Activated T-helper 2 cell treated with anti-CD3 and anti-CD28 coated beads, Interferon-gamma antibody, Interleukin-2, Interleukin-4, amounts not matched to agents 10 μg/mL and 5 μg/mL and 100 μg/mL, durations not matched to agents 14 hours and 24 hours and 36 hours (primary cell): ENCODE measurements at regions of chr4 and their contacts with region 1.

Region 1: DNA sequence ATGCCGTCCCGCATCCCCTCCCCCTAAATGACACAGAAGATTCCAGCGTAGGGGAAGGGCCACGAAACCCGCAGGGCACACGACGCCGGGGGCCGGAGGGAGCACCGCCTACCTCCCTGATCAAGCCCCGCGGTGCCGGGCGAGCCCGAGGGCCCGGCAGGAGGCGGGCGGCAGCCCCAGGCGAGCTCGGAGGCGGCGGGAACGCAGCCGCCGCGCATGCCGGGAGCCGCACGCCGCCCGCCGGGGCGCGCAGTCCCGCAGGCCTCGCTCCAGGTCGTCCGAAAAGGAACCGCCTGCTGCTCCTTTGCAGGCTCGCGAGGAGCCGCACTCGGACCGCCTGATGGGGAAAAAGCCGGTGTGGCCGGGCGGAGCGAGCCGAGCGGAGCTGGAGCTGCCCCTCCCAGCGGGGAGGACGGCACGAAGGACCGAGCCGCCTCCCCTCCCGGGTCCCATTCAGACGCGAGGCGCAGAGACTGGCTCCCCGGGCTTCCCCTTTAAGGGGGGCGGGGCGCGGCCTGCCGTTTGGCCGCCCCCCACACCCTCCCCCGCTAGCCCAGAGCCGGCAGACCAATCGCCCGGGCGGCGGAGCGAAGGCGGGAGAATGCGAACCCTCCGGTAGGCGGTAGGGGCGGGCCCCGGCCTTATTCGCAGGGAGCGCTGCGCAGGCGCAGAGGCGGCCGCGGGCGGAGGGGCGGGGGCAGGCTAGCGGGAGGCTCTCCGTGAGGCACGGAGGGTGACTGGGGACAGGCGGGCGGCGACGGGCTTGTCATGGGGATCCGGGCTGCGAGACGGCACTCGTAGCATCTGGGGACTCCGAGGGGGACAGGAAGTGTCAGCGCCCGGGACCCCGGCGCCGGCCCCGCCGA is 561 bp upstream of the ING2 start:
- DNase-seq: peak; percentile 99
- H3K4me3 Mint-ChIP-seq: peak overlapping the region; percentile 92
- H3K27ac Mint-ChIP-seq: peak overlapping the region; percentile 85
- H3K4me1 Mint-ChIP-seq: peaks cover 35% of the 10 kb centered on the region
- H3K27me3 Mint-ChIP-seq: no peaks in the 10 kb centered on the region

Region 2: GRCh38 chr4:182917182-182918043 is 586.9 kb before region 1 on chr4 and contains the start of gene DCTD:
- intact Hi-C with region 1: loop called (anchors 5 kb)
- DNase-seq: peak; percentile 77
- H3K4me3 Mint-ChIP-seq: peak within 1 kb of the TSS; percentile 92
- H3K27ac Mint-ChIP-seq: peak within 1 kb of the TSS; percentile 97
- H3K4me1 Mint-ChIP-seq: peaks cover 35% of the 10 kb centered on the region
- H3K27me3 Mint-ChIP-seq: peaks cover 5% of the 10 kb centered on the region
- total RNA-seq, gene DCTD: 121 and 133 TPM in 2 replicates

Region 3: DNA sequence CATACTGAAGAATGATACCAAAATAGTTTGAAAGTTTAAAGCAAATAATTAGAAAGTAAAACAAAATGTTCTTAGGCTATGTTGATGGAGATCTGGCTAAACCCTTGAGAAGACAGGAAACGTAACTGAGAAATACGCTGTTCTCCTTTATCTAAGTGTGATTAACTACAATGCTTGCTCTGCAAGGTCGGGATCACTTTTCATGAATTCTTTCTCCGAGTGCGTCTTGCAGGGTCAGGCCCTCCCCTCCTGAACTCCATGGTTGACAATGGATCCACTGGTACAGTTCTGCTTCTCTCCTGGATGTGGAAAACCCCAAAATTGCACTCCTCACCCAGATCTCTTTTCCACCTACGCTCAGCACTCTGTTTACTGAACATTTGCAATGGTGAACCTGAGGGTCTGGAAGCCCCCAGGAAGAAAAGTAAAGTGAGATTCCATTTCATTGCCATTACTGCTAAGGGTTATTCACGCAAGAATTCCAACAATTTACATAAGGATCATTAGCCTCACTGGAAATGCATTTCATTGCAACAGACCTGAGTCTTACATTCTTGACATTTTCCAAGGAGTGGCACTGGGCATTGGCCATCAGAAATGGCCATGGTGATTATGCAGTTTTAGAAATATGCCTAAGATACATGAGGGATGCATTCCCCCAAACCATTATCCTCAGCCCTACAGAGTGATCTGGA is 429.9 kb before region 1 on chr4:
- intact Hi-C with region 1: no loop called
- DNase-seq: no peak
- H3K4me3 Mint-ChIP-seq: no peak overlapping the region
- H3K27ac Mint-ChIP-seq: no peak overlapping the region
- H3K4me1 Mint-ChIP-seq: no peaks in the 10 kb centered on the region
- H3K27me3 Mint-ChIP-seq: peaks cover 18% of the 10 kb centered on the region

Region 4: DNA sequence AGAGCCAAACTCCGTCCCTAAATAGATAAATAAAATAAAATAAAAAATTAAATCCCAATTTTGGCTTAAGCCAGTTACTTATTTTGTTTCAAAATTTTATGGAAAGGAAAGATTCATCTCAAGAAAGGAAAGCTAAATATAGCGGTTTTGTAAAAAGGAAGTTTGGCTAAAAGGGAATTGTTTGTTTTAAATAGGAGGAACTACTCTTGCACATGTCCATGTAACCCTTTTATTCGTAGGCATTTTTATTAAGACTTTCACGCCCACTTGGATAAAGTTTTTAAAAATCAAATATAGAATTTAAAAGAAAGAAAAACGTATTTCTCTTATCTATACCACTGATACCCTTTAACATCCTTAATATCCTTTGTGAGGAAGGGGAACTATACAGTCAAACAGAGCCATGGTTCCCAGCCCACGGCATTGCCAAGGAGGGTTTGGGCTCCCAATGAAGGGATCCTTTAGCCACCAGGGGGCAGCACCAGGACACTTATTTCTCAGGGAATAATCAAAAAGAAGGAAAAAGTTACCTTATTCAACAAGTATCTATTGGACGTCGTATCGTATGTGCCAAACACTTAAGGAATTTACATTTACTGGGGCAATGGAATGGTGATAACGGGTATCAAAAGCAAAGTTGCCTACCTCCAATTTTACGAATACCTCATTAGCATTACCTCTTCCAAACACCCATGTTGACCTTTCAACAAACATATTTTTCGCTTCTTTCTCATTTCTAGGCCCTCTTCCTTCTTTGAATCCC is 32.2 kb before region 1 on chr4:
- intact Hi-C with region 1: loop called (anchors 1 kb)
- DNase-seq: peak; percentile 48
- H3K4me3 Mint-ChIP-seq: no peak overlapping the region
- H3K27ac Mint-ChIP-seq: no peak overlapping the region
- H3K4me1 Mint-ChIP-seq: peaks cover 5% of the 10 kb centered on the region
- H3K27me3 Mint-ChIP-seq: no peaks in the 10 kb centered on the region

Region 5: DNA sequence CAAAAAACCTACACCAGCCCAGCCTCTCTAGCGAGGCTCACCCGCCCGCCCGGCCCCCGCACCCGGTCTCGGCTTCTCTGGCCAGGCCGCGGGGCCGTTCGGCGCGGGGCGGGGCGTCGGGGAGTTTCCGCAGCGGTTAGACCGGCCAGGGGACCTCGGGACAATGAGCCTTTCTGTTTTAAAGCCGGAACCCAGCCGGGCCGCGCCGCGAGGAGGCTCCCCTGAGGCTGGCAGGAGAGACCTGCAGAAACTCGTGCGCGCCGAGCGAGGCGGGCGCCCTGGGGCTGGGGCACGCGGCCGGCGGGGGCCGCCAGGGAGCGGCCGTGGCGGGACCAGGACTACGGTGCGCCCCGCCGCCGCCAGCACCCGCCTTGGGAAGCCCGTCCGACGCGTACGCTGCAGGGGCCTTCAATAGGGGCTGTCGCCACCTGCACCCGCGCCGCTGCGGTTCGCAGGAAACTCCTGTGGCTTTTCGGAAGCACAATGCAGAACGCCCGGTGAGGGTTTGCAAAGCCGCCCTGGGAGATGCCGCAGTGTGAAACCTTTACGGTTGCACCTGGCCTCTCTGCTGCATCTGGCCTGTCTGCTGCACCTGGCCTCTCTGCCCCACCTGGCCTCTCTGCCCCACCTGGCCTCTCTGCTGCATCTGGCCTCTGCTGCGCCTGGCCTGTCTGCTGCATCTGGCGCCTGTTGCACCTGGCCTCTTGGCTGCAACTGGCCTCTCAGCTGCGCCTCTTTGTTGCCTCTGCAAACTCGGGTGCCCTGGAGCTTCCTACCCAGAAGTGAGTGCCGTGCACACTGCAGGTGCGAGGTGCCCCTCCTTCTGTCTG is 218.6 kb after region 1 on chr4:
- intact Hi-C with region 1: loop called (anchors 5 kb)
- DNase-seq: peak; percentile 37
- H3K4me3 Mint-ChIP-seq: peak overlapping the region; percentile 80
- H3K27ac Mint-ChIP-seq: no peak overlapping the region
- H3K4me1 Mint-ChIP-seq: peaks cover 9% of the 10 kb centered on the region
- H3K27me3 Mint-ChIP-seq: peaks cover 31% of the 10 kb centered on the region

Region 6: GRCh38 chr4:183873409-183874185 is 369.3 kb after region 1 on chr4:
- intact Hi-C with region 1: no loop called
- DNase-seq: no peak
- H3K4me3 Mint-ChIP-seq: no peak overlapping the region
- H3K27ac Mint-ChIP-seq: no peak overlapping the region
- H3K4me1 Mint-ChIP-seq: no peaks in the 10 kb centered on the region
- H3K27me3 Mint-ChIP-seq: no peaks in the 10 kb centered on the region

Region 7: DNA sequence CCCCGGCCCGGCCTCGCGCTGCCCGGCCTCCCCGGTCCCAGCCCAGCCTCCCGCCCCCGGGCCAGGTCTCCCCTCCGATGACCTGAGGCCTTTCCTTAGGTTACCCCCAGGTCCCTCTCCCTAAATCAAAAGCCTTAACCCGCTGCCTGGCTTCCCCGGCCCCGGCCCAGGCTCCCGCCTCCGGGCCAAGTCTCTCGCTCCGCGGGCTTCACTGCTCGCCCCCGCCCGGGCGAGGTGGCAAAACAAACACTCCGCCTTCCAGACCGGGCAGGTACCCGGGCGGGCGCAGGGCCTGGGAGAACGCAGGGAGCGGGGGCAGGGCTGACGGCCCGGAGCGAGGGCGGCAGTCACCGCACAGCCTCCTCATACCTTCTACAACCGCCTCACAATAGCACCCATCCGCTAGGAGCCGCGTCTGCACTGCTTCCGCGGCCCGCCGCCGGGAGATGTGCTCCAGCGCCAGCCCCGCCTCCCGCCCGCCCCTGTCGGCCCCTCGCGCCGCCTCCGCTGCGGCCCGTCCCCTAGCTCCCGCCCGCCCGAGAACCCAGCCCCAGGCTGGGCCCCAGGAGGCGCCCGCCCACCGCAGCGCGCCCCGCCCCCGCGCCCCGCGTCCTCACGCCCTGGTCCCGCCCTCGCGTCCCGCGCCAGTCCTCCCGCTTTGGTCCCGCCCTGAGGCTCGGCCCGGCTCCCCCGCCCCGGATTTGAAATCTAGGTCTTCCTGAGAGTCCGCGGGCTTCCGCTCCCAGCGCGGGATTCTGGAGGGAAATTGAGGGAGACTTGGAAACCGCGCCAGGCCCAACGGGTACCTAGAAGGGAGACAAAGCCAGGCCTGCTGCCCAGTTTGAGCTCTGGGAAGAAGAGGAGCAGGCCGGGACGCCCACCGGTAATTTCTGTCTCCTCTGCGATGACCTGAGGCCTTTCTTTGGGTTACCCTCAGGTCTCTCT is 1145.0 kb after region 1 on chr4 and contains the starts of genes CASP3 and PRIMPOL:
- intact Hi-C with region 1: loop called (anchors 2 kb)
- DNase-seq: peak; percentile 96
- H3K4me3 Mint-ChIP-seq: peak within 1 kb of the TSS; percentile 95
- H3K27ac Mint-ChIP-seq: peak within 1 kb of the TSS; percentile 88
- H3K4me1 Mint-ChIP-seq: peaks cover 52% of the 10 kb centered on the region
- H3K27me3 Mint-ChIP-seq: no peaks in the 10 kb centered on the region
- total RNA-seq, gene CASP3: 90.9 and 94.1 TPM in 2 replicates
- total RNA-seq, gene PRIMPOL: 16.2 and 17.6 TPM in 2 replicates

Region 8: DNA sequence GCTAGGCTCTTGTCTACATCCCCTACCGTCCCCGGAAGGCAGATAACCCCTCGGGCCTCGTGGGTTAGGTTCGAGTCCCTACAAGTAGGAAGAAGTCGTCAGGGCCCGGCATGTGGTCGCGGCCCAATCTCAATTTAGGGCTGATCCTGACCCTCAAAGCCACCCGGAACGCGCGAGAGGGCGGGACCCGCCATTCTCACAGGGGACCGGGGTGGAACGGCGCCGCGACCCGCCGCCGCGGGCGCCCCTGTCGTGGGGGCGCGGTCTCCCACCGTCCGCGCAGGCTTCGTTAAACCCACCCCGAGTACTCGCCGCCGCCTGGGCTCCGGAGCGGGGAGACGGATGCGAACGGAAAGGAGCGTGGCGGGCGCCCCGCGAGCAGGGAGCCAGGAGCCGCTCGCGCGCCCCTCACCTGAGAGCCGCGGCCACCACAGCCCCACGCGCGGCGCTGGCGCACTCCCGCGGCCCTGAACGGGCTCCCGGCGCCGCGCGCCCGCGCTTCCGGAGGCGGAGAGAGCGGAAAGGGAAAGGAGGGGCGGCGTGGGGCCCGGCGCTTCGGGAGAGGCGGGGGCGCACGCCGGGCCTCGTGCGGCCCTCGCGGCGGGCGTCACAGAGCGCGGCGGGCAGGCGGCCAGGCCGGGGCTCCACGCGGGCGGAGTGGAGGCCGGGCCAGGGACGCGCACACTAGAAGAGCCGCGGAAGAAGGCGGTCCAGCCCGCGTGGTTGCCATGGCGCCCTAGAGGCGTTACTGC is 1699.4 kb after region 1 on chr4 and contains the start of gene CFAP97:
- intact Hi-C with region 1: loop called (anchors 10 kb)
- DNase-seq: peak; percentile 71
- H3K4me3 Mint-ChIP-seq: peak within 1 kb of the TSS; percentile 98
- H3K27ac Mint-ChIP-seq: peak within 1 kb of the TSS; percentile 99
- H3K4me1 Mint-ChIP-seq: peaks cover 30% of the 10 kb centered on the region
- H3K27me3 Mint-ChIP-seq: peaks cover 5% of the 10 kb centered on the region
- total RNA-seq, gene CFAP97: 44.1 and 46.9 TPM in 2 replicates